WTC11 (cell line): ENCODE measurements at regions of chr11 and their contacts with region 1.

Region 1: DNA sequence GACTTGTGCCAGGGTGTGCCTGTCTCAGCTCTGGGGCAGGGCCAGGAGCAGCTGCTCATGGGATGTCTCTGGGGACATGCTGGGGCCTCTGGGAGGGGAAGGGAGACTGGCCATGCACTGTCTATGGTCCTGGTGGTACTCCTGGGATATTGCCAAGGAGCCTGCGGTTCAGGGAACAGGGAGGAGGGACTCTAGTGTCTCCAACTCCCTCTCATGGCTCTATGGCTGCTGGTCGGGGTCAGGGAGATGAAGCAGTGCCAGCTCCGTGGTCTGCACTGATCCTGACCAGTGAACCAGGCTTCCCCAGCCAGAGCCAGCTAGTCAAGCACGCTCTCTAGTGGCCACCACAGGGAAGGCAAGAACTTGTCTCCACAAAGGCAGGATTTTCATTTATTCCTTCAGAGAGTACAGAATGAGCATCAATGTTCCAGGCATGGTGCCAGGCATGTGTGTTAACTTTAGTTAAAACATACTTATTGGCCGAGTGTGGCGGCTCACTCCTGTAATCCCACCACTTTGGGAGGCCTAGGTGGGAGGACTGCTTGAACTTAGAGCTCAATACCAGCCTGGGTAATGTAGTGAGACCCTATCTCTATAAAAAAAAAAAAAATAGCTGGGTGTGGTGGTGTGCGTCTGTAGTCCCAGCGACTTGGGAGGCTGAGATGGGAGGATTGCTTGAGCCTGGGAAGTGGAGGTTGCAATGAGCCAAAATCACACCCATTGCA is 2.5 kb upstream of the BEST1 start:
- DNase-seq: peak; percentile 89
- ATAC-seq: peak; percentile 93
- H3K4me3 Mint-ChIP-seq: no peak overlapping the region
- H3K27ac Mint-ChIP-seq: no peak overlapping the region
- H3K4me1 Mint-ChIP-seq: peaks cover 7% of the 10 kb centered on the region
- H3K27me3 Mint-ChIP-seq: peaks cover 3% of the 10 kb centered on the region
- CTCF ChIP-seq: peak; percentile 83

Region 2: DNA sequence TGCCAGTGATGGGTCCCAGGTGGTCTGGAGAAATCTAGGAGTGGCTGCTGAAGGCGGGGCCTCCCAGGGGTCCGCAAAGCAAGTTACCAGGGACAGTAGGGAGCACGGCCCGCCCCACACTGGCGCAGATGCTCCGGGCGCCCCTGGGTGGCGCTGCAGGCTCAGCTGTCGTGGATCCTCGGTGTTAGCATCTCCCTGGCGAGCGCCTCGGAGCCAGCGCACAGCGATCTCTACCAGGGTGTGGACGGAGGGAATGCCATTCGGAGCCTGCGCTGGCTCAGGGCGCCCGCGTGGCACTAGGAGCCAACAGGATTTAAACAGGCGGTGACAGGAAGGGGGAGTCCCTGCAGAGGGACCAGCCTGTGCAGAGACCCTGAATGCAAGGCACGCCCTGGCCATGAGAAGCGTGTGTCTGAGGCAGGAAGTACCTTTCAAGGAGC is 76.5 kb before region 1 on chr11:
- CTCF ChIA-PET with region 1: interaction called, 69 read pairs
- POLR2A ChIA-PET with region 1: interaction called, 5 read pairs
- DNase-seq: peak; percentile 92
- ATAC-seq: peak; percentile 87
- H3K4me3 Mint-ChIP-seq: peak overlapping the region; percentile 50
- H3K27ac Mint-ChIP-seq: no peak overlapping the region
- H3K4me1 Mint-ChIP-seq: peaks cover 18% of the 10 kb centered on the region
- H3K27me3 Mint-ChIP-seq: peaks cover 9% of the 10 kb centered on the region
- CTCF ChIP-seq: peak; percentile 87

Region 3: DNA sequence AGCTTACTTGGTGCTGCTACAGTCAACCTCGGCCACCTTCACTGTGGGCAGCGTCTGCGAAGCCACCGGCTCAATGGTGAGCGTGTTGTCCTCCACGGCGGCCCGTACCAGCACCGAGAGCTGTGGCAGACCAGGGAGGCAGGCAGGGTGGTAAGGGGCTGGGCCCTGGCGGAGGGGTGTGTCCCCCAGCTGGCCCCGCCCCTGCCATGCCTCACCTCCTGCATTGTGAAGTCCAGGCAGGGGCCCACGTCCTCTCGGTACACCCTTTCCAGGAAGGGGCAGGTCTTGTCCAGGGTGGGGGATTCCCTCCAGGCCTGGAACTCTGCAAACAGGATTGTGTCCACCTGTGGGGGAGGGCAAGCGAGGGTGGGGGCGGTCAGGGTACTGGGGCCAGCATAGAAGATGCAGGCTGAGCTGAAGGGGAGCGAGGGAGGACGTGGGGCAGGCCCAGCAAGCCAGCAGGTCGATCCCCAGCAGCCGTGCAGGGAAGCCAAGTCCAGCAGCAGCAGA is 43.1 kb before region 1 on chr11:
- CTCF ChIA-PET with region 1: interaction called, 685 read pairs
- POLR2A ChIA-PET with region 1: interaction called, 26 read pairs
- DNase-seq: peak; percentile 72
- ATAC-seq: peak; percentile 84
- H3K4me3 Mint-ChIP-seq: no peak overlapping the region
- H3K27ac Mint-ChIP-seq: no peak overlapping the region
- H3K4me1 Mint-ChIP-seq: peaks cover 29% of the 10 kb centered on the region
- H3K27me3 Mint-ChIP-seq: no peaks in the 10 kb centered on the region
- CTCF ChIP-seq: no peak

Region 4: GRCh38 chr11:61917341-61918109 is 30.1 kb before region 1 on chr11 and contains the start of gene RAB3IL1:
- CTCF ChIA-PET with region 1: interaction called, 74 read pairs
- POLR2A ChIA-PET with region 1: interaction called, 3 read pairs
- DNase-seq: peak; percentile 59
- ATAC-seq: peak; percentile 79
- H3K4me3 Mint-ChIP-seq: peak within 1 kb of the TSS; percentile 75
- H3K27ac Mint-ChIP-seq: no peak within 1 kb of the TSS
- H3K4me1 Mint-ChIP-seq: peaks cover 18% of the 10 kb centered on the region
- H3K27me3 Mint-ChIP-seq: peaks cover 38% of the 10 kb centered on the region
- CTCF ChIP-seq: no peak
- total RNA-seq, gene RAB3IL1: 7.2 to 11.1 TPM (median 8.9 TPM) in 3 replicates

Region 5: GRCh38 chr11:61928606-61929005 is 19.0 kb before region 1 on chr11:
- CTCF ChIA-PET with region 1: interaction called, 74 read pairs
- POLR2A ChIA-PET with region 1: interaction called, 3 read pairs
- DNase-seq: no peak
- ATAC-seq: no peak
- H3K4me3 Mint-ChIP-seq: no peak overlapping the region
- H3K27ac Mint-ChIP-seq: no peak overlapping the region
- H3K4me1 Mint-ChIP-seq: peaks cover 28% of the 10 kb centered on the region
- H3K27me3 Mint-ChIP-seq: peaks cover under 1% of the 10 kb centered on the region; the same call in 1 of the 2 replicates
- CTCF ChIP-seq: no peak

Region 6: GRCh38 chr11:62061351-62062222 is 113.9 kb after region 1 on chr11:
- CTCF ChIA-PET with region 1: interaction called, 12 read pairs
- POLR2A ChIA-PET with region 1: no interaction called
- DNase-seq: no peak
- ATAC-seq: no peak
- H3K4me3 Mint-ChIP-seq: no peak overlapping the region
- H3K27ac Mint-ChIP-seq: peak overlapping the region; percentile 23; the same call in 1 of the 2 replicates
- H3K4me1 Mint-ChIP-seq: 0 out of 2 replicates have a peak, but pooled peaks cover 6% of the 10 kb centered on the region
- H3K27me3 Mint-ChIP-seq: no peaks in the 10 kb centered on the region; the same call in 1 of the 2 replicates
- CTCF ChIP-seq: no peak